Prostate gland (tissue), 2 donors: ENCODE measurements at regions of chr7 and their contacts with region 1.

Region 1: GRCh38 chr7:66654123-66654732 is 25.5 kb downstream of the KCTD7 start:
- DNase-seq: peak; percentile 97
- H3K4me3 ChIP-seq: peak overlapping the region; percentile 88 to 92
- H3K27ac ChIP-seq: peak overlapping the region; percentile 97 to 98
- H3K4me1 ChIP-seq: no peaks in the 10 kb centered on the region
- H3K27me3 ChIP-seq: no peaks in the 10 kb centered on the region
- CTCF ChIP-seq: peak; percentile 11 to 49 (median 41)
- POLR2A ChIP-seq: peak; percentile 99

Region 2: GRCh38 chr7:66557608-66558143 is 96.6 kb before region 1 on chr7:
- intact Hi-C with region 1: loop called (anchors 10 kb)
- DNase-seq: peak; percentile 49
- H3K4me3 ChIP-seq: no peak overlapping the region
- H3K27ac ChIP-seq: no peak overlapping the region
- H3K4me1 ChIP-seq: no peaks in the 10 kb centered on the region
- H3K27me3 ChIP-seq: no peaks in the 10 kb centered on the region
- CTCF ChIP-seq: peak; percentile 87 to 97 (median 92)
- POLR2A ChIP-seq: no peak

Region 3: GRCh38 chr7:66740302-66740979 is 86.2 kb after region 1 on chr7 and contains the start of gene RABGEF1:
- intact Hi-C with region 1: loop called (anchors 10 kb)
- DNase-seq: peak; percentile 97
- H3K4me3 ChIP-seq: peak within 1 kb of the TSS; percentile 71 to 99
- H3K27ac ChIP-seq: peak within 1 kb of the TSS; percentile 93
- H3K4me1 ChIP-seq: no peaks in the 10 kb centered on the region
- H3K27me3 ChIP-seq: no peaks in the 10 kb centered on the region
- CTCF ChIP-seq: no peak
- POLR2A ChIP-seq: peak; percentile 92
- total RNA-seq, gene RABGEF1: 20.8 to 49.6 TPM